HEK293 (cell line): ENCODE measurements at regions of chr14 and their contacts with region 1.

Region 1: DNA sequence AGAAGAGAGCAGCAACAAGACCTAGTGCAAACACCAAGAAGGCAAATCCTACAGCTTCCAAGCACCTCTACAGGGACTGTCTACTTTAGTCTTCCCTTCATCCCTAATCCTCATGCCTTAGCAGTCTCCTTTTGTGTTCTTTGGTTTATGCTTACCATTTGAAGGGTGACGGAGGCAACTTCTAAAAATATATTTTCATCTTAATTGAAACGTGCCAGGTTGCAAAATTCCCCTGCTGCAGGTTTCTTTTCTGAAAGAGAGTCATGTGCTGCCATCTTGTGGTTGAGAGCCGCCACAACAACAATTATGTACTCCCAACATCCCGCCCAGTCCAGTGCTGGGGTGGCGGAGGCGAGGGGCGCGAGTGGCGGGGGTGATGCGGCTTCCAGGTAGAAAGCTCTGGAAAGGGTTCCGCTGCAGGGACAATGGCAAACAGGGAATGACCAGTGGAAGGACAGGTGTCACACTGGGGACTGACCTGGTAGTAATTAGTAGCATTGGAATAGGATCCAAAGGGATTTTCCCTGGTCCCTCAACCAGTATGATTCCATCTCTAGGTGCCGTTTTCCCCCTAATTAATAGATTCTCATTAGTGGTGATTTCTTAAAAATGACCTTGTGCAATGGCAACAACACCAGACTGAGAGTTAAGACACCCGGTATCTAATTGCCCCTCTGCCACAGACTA is 80.3 kb upstream of the GNG2 start:
- H3K4me3 ChIP-seq: peak overlapping the region; percentile 9; the same call in 1 of the 2 replicates
- H3K27ac ChIP-seq: no peak overlapping the region
- H3K4me1 ChIP-seq: no peaks in the 10 kb centered on the region
- CTCF ChIP-seq: peak; percentile 13; the same call in 1 of the 2 replicates

Region 2: GRCh38 chr14:51630801-51631386 is 149.3 kb before region 1 on chr14:
- CTCF ChIA-PET with region 1: no interaction called
- POLR2A ChIA-PET with region 1: no interaction called
- H3K4me3 ChIP-seq: no peak overlapping the region
- H3K27ac ChIP-seq: no peak overlapping the region
- H3K4me1 ChIP-seq: peaks cover 3% of the 10 kb centered on the region; the same call in 1 of the 2 replicates
- CTCF ChIP-seq: no peak

Region 3: DNA sequence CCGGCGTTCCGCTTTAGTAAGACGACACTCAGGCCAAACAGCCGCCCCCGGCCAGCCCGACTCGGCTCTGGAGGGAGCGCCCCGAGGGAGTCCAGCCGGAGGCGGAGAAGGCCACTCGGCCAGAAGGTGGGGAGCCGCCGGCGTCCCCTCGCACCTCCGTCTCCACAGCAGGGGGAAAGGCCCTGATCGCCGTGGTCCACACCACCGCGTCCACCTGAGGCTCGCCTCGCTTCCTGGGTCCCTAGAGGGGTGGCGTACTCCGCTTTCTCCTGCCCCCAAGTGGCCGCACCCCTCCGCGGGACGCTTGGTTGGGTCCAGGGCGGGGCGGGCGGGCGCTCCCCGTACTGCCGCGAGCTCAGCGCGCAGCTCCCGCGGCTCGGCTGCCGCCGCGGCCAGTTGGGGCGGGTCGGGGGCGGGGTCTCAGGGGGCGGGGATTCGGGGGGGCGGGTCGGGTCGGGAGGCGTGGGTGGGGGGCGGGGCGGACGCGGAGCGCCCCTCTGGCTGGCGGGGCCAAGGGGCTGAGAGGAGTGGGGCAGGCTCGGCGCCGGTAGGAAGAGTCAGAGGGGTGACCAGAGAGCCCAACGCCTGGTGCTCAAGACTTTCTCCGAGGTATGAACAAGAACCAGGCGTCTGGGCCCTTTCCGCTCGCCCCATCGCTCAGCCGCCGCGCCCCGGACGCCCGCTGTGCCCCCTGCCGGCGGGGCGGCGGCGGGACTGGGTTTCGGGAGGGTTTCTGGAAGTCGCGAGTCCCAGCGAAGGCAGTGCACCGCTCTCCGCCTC is 128.6 kb before region 1 on chr14 and contains the start of gene FRMD6:
- CTCF ChIA-PET with region 1: interaction called, 19 read pairs
- POLR2A ChIA-PET with region 1: interaction called, 5 read pairs
- H3K4me3 ChIP-seq: peak within 1 kb of the TSS; percentile 95
- H3K27ac ChIP-seq: peak within 1 kb of the TSS; percentile 98
- H3K4me1 ChIP-seq: peaks cover 27% of the 10 kb centered on the region
- CTCF ChIP-seq: peak; percentile 72

Region 4: DNA sequence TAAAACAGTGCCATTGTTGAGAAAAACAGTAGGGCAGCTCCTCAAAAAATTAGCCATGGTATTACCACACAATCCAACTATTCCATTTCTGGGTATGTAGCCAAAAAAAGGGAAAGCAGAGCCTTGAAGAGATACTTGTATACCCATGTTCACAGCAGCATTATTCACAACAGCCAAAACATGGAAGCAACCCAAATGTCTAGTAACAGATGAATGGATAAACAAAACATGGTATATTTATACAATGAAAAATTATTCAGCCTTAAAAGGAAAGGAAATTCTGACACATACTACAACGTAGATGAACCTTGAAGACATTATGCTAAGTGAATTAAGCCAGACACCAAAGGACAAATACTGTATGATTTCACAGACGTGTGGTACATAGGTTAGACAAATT is 12.7 kb after region 1 on chr14:
- CTCF ChIA-PET with region 1: interaction called, 11 read pairs
- POLR2A ChIA-PET with region 1: no interaction called
- H3K4me3 ChIP-seq: no peak overlapping the region
- H3K27ac ChIP-seq: no peak overlapping the region
- H3K4me1 ChIP-seq: no peaks in the 10 kb centered on the region
- CTCF ChIP-seq: no peak

Region 5: DNA sequence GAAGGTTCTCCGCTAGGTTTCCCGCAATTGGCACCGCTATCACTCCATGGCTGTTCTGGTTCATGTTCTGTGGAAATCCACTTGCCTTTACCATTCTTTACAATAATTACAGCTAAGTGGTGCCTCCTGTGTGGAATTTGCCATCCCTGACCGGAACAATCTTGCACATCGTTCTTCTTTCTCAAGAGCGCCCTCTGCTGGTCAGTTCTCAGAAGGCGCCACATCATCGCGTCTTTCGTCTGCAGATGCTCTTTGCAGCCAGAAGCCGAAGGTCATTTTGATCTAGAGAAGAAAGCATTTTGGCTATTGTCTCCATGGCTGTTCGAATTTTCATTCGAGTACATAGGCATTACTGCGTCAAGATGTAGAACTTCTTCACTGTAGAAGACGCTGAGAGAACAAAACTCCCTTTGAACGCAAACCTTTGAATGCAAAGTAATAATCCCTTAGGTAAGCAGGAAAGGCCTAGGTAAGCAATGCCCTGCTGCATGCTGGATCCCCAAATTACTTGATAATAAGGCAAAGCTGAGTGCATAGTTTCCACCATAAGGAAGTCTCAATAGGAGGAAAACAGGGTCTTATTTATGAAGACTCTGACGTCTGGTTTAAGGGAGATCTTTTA is 199.1 kb after region 1 on chr14:
- CTCF ChIA-PET with region 1: interaction called, 20 read pairs
- POLR2A ChIA-PET with region 1: no interaction called
- H3K4me3 ChIP-seq: no peak overlapping the region
- H3K27ac ChIP-seq: no peak overlapping the region
- H3K4me1 ChIP-seq: no peaks in the 10 kb centered on the region
- CTCF ChIP-seq: peak; percentile 29; the same call in 1 of the 2 replicates